ENCODE measurements at regions of chr3 and their contacts with region 1.

Region 1: GRCh38 chr3:153357436-153357835 is 195.4 kb downstream of the RAP2B start:
- DNase-seq: no peak

Region 2: DNA sequence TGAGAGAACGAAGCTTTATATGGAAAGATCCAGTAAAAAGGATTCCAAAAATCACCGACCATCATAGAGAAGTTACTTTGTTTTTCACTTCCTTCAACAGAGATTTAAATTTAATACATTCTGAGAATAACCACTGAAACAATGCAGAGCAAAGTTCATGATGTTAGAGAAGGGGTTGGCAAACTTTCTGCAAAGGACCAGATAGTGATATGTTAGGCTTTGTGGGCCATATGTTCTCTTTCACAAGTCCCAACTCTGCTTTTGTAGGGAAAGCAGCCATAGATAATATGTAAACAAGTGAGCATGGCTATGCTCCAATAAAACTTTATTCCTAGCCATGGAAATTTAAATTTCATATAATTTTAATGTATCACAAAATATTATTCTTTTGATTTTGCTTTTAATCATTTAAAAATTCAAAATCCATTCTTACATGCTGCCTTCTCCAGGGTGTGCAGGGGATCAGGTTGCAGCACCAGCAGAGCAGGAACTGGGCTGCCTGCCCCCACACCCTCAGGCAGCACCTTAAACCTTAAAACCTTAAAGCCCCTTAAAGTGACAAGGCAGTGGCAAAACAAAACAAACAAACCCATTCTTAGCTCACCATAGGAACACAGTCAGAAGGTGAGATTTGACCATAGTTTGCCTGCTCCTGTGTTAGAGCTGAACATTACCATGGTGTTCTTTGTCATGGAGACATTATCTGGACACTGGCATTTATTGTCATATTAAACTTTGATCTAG is 1879.7 kb before region 1 on chr3:
- intact Hi-C with region 1: no loop called
- DNase-seq: no peak

Region 3: DNA sequence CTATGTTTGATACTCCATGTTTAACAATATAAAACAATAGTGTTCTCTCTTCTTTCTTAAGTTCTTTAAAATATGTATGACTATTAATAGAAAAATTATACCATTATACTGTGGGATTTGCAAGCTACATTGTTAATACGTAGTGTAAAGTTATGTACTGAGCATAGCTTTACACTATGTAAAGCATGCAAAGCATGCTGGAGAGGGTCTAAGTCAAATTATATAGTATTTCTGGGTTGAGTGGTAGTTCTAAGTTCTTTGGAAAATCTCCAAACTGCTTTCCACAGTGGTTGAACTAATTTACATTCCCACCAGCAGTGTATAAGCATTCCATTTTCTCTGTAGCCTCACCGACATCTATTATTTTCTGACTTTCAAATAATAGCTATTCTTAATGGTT is 57.5 kb after region 1 on chr3:
- intact Hi-C with region 1: no loop called
- DNase-seq: no peak

Region 4: DNA sequence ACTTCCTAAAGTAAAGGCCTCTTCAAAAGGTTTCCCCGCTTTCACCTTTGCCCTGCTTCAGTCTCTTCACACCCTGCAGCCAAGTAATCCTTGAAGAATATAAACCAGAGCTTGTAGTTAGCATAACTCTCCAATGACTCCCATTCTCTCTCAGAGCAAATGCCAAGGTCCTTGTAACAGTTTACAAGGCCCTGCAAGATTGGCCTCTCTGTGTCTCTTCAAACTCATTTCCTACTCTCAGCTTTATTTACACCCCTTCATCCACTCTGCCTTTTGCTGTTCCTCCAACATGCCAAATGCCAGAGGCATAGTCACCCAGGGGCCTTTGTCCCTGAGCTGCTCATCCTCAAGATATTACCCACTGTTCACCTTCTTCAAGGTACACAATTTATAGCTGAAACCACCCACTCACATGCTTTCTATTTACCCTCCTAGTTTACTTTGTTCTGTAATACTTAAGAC is 1662.2 kb after region 1 on chr3:
- intact Hi-C with region 1: loop called in 1 of 2 experiments (anchors 5 kb)
- DNase-seq: no peak